Activated CD4-positive, alpha-beta memory T cell treated with anti-CD3 and anti-CD28 coated beads for 36 hours (primary cell): ENCODE measurements at regions of chr14 and their contacts with region 1.

Region 1: GRCh38 chr14:23294734-23295561 is 7.7 kb downstream of the PPP1R3E start:
- DNase-seq: peak; percentile 62
- H3K4me3 Mint-ChIP-seq: no peak overlapping the region
- H3K27ac Mint-ChIP-seq: peak overlapping the region; percentile 29
- H3K4me1 Mint-ChIP-seq: peaks cover 21% of the 10 kb centered on the region
- H3K27me3 Mint-ChIP-seq: no peaks in the 10 kb centered on the region

Region 2: DNA sequence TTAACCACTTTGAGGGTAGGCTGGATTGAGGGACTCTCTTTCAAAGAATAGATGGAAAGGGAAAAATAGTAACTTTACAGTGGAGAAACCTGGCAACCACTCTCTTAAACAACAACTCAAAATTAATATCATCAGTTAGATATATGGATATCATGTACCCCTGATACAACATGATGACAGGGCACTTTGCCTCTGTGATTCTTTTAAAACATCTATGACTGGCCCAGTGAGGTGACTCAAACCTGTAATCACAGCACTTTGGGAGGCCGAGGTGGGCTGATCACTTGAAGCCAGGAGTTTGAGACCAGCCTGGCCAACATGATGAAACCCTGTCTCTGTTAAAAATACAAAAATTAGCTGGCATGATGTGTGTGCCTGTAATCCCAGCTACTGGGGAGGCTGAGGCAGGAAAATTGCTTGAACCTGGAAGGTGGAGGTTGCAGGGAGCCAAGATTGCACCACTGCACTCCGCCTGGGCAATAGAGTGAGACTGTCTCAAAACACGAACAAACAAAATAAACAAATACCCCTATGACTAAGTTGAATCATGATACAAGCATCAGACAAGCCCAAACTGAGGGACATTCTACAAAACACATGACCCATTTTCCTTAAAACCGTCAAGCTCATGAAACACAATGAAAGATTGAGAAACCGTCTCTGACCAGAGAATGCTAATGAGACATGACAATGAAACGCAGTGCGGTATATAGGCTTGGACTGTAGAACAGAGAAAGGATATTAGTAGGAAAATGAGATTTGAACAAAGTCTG is 85.1 kb before region 1 on chr14:
- CTCF ChIA-PET with region 1: no interaction called
- POLR2A ChIA-PET with region 1: no interaction called
- intact Hi-C with region 1: no loop called
- DNase-seq: no peak
- H3K4me3 Mint-ChIP-seq: no peak overlapping the region
- H3K27ac Mint-ChIP-seq: no peak overlapping the region
- H3K4me1 Mint-ChIP-seq: no peaks in the 10 kb centered on the region
- H3K27me3 Mint-ChIP-seq: peaks cover 18% of the 10 kb centered on the region

Region 3: DNA sequence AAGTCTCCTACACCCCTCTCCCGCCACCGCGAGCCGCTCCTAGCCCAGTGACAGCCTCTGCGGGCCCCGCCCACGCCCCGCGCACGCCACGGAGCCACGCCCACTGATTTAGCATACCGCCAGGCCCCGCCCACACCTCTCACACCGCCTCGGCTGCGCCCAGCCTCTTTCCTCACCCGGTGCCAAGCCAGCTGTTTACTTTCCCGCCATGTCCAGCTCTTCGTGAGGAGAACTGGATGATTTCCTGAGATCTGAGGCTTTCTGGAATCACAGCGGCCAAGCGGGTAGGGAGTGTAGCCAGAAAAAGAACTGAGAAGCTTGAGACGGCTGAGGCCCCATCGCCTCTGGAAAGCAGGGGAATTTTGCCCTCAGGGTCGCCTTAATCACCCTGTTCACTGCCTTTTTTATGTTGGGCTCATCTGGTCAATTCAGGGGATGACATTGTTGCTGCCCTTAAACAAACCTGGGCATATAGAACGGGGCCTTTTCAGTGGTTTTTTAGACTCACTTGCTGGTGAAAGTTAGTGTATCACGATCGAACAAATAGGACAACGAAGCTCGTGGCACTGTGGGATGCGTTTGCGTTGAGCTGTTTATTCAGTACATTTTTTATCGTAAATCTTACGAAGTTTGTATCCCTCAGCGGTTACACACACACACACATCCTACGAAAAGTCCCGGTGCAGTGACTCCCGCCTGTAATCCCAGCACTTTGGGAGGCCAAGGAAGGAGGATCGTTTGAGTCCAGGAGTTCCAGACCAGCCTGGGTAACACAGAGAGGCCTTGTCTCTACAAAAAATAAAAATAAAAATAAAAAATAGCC is 57.0 kb before region 1 on chr14 and contains the start of gene RNF212B:
- CTCF ChIA-PET with region 1: no interaction called
- POLR2A ChIA-PET with region 1: no interaction called
- intact Hi-C with region 1: loop called (anchors 5 kb)
- DNase-seq: peak; percentile 92
- H3K4me3 Mint-ChIP-seq: peak within 1 kb of the TSS; percentile 56
- H3K27ac Mint-ChIP-seq: no peak within 1 kb of the TSS
- H3K4me1 Mint-ChIP-seq: peaks cover 3% of the 10 kb centered on the region
- H3K27me3 Mint-ChIP-seq: peaks cover 13% of the 10 kb centered on the region
- total RNA-seq, gene RNF212B: not detected

Region 4: GRCh38 chr14:23269193-23269592 is 25.8 kb before region 1 on chr14:
- CTCF ChIA-PET with region 1: interaction called, 4 read pairs
- POLR2A ChIA-PET with region 1: no interaction called
- intact Hi-C with region 1: loop called (anchors 1 kb)
- DNase-seq: no peak
- H3K4me3 Mint-ChIP-seq: no peak overlapping the region
- H3K27ac Mint-ChIP-seq: no peak overlapping the region
- H3K4me1 Mint-ChIP-seq: no peaks in the 10 kb centered on the region
- H3K27me3 Mint-ChIP-seq: peaks cover 4% of the 10 kb centered on the region

Region 5: GRCh38 chr14:23281247-23281646 is 13.7 kb before region 1 on chr14:
- CTCF ChIA-PET with region 1: interaction called, 60 read pairs
- POLR2A ChIA-PET with region 1: interaction called, 31 read pairs
- intact Hi-C with region 1: loop called (anchors 1 kb)
- DNase-seq: no peak
- H3K4me3 Mint-ChIP-seq: no peak overlapping the region
- H3K27ac Mint-ChIP-seq: no peak overlapping the region
- H3K4me1 Mint-ChIP-seq: peaks cover 19% of the 10 kb centered on the region
- H3K27me3 Mint-ChIP-seq: no peaks in the 10 kb centered on the region